ENCODE measurements at regions of chr5 and their contacts with region 1.

Region 1: GRCh38 chr5:171907725-171908343 is 98.6 kb downstream of the FBXW11 start:
- DNase-seq: peak; percentile 47
- ATAC-seq: peak; percentile 78
- H3K4me3 Mint-ChIP-seq: no peak overlapping the region
- H3K27ac Mint-ChIP-seq: no peak overlapping the region
- H3K4me1 Mint-ChIP-seq: peaks cover 33% of the 10 kb centered on the region
- H3K27me3 Mint-ChIP-seq: no peaks in the 10 kb centered on the region
- CTCF ChIP-seq: peak; percentile 63

Region 2: DNA sequence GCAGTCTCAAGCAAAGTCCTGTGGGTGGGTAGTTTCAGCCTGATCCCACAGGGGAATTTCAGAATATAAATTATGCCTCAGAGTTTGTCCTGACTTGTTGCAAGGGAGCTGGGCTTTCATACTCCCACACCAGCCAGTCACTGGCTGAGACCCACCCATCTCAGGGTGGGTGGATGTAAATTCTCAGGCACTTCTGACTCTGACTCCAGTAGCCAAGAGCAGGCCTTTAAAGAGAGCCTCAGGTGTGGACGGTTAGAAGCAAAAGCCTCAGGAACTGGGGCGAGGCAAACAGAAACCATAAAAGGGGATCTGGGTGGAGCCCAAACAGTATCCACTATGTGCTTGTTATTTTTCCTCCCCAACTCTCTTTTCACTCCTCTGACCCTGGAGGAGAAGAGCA is 127.2 kb after region 1 on chr5:
- CTCF ChIA-PET with region 1: interaction called, 74 read pairs
- POLR2A ChIA-PET with region 1: no interaction called
- DNase-seq: no peak
- ATAC-seq: no peak
- H3K4me3 Mint-ChIP-seq: no peak overlapping the region
- H3K27ac Mint-ChIP-seq: no peak overlapping the region
- H3K4me1 Mint-ChIP-seq: no peaks in the 10 kb centered on the region; the same call in 1 of the 2 replicates
- H3K27me3 Mint-ChIP-seq: peaks cover 7% of the 10 kb centered on the region
- CTCF ChIP-seq: no peak

Region 3: DNA sequence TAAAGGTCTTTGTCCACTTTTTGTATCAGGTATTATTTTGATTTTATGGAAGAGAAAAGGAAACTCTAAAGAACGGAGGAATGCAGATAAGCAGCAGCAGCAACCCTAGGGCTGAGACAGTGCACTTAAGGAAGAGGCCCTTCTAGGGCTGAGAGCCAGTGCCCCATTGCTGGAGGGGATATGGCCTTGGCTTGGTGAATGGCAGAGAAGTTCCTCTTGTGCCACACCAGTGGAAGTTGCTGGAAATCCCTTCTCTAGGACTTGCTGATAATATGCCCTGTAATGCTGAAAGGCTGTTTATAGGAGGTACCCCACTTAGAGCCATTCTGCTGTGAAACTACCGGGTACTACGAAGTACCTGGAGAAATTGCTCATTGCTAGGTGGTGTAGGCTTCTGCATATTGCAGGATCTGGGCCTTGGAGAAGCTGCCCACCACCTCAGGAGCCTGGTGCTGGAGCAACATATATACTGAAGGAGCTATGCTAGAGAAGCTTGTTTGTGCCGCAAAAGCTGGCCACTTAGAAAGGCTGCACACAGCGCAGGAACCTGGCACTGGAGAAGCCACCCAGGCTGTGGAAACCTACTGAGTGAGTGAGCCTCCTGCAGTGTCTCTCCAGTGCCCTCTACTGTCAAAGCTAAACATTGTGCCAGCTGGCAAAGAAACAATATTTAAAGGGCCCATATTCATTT is 385.4 kb after region 1 on chr5:
- CTCF ChIA-PET with region 1: interaction called, 12 read pairs
- POLR2A ChIA-PET with region 1: no interaction called
- DNase-seq: peak; percentile 53
- ATAC-seq: peak; percentile 98
- H3K4me3 Mint-ChIP-seq: no peak overlapping the region
- H3K27ac Mint-ChIP-seq: no peak overlapping the region
- H3K4me1 Mint-ChIP-seq: no peaks in the 10 kb centered on the region
- H3K27me3 Mint-ChIP-seq: peaks cover 7% of the 10 kb centered on the region; the same call in 1 of the 2 replicates
- CTCF ChIP-seq: no peak; the same call in 1 of the 2 replicates